CD4-positive, alpha-beta T cell (primary cell): ENCODE measurements at regions of chr11 and their contacts with region 1.

Region 1: GRCh38 chr11:46392421-46393230 is 1.1 kb upstream of the CHRM4 start:
- DNase-seq: peak; percentile 57 to 89 (median 72)
- ATAC-seq: peak; percentile 87
- H3K4me3 ChIP-seq: peak overlapping the region; percentile 24
- H3K4me3 Mint-ChIP-seq: peak overlapping the region; percentile 74
- H3K27ac ChIP-seq: no peak overlapping the region
- H3K27ac Mint-ChIP-seq: no peak overlapping the region
- H3K4me1 ChIP-seq: peaks cover 46% of the 10 kb centered on the region
- H3K4me1 Mint-ChIP-seq: peaks cover 34% of the 10 kb centered on the region
- H3K27me3 ChIP-seq: peaks cover 38 to 51% of the 10 kb centered on the region in 2 experiments
- H3K27me3 Mint-ChIP-seq: peaks cover 46% of the 10 kb centered on the region
- CTCF ChIP-seq: no peak

Region 2: DNA sequence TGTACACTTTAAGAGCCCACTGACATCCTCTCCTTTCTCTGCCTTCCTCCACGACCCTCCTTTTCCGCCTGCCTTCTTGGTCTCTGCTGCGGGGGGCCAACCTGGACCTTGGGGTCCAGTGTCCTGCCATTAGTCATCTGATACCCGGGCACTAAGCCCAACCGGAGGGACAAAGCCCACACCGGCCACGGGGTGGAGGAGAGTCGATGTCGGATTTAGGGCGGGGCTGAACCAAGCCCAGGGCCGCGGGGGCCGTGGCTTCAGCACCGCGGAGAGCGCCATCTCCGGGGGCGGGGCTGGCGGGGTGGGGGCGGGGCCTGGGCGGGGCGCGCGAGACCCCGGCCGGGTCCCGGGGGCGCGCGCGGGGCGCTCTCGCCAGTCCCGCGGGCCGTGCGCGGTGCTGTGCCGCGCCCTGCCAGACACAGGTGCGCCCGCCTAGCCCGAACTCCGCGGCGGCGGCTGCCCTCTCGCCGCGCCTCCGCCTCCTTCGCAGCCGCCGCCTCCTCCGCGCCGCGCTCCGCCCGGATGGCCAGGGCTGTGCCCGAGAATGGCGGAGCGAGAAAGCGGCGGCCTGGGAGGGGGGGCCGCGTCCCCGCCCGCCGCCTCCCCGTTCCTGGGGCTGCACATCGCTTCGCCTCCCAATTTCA is 507.2 kb before region 1 on chr11 and contains the start of gene MAPK8IP1:
- CTCF ChIA-PET with region 1: no interaction called
- POLR2A ChIA-PET with region 1: no interaction called
- intact Hi-C with region 1: loop called in 1 of 2 experiments (anchors 5 kb)
- DNase-seq: peak; percentile 14 to 83 (median 46)
- ATAC-seq: peak; percentile 74
- H3K4me3 ChIP-seq: peak within 1 kb of the TSS; percentile 41
- H3K4me3 Mint-ChIP-seq: peak within 1 kb of the TSS; percentile 81
- H3K27ac ChIP-seq: no peak within 1 kb of the TSS
- H3K27ac Mint-ChIP-seq: peak within 1 kb of the TSS; percentile 77
- H3K4me1 ChIP-seq: peaks cover 13% of the 10 kb centered on the region
- H3K4me1 Mint-ChIP-seq: peaks cover 11% of the 10 kb centered on the region
- H3K27me3 ChIP-seq: no peaks in the 10 kb centered on the region
- H3K27me3 Mint-ChIP-seq: peaks cover 5% of the 10 kb centered on the region
- CTCF ChIP-seq: no peak
- total RNA-seq, gene MAPK8IP1: 2.3 to 2.4 TPM

Region 3: GRCh38 chr11:46003574-46003973 is 389.1 kb before region 1 on chr11:
- CTCF ChIA-PET with region 1: no interaction called
- POLR2A ChIA-PET with region 1: no interaction called
- intact Hi-C with region 1: no loop called
- DNase-seq: no peak
- ATAC-seq: no peak
- H3K4me3 ChIP-seq: no peak overlapping the region
- H3K4me3 Mint-ChIP-seq: no peak overlapping the region
- H3K27ac ChIP-seq: no peak overlapping the region
- H3K27ac Mint-ChIP-seq: no peak overlapping the region
- H3K4me1 ChIP-seq: no peaks in the 10 kb centered on the region
- H3K4me1 Mint-ChIP-seq: peaks cover 11% of the 10 kb centered on the region
- H3K27me3 ChIP-seq: no peaks in the 10 kb centered on the region
- H3K27me3 Mint-ChIP-seq: no peaks in the 10 kb centered on the region
- CTCF ChIP-seq: no peak

Region 4: GRCh38 chr11:46537537-46538295 is 145.1 kb after region 1 on chr11:
- CTCF ChIA-PET with region 1: no interaction called
- POLR2A ChIA-PET with region 1: no interaction called
- intact Hi-C with region 1: loop called in 1 of 2 experiments (anchors 5 kb)
- DNase-seq: peak; percentile 30 to 82 (median 48)
- ATAC-seq: peak; percentile 96
- H3K4me3 ChIP-seq: no peak overlapping the region
- H3K4me3 Mint-ChIP-seq: no peak overlapping the region
- H3K27ac ChIP-seq: no peak overlapping the region
- H3K27ac Mint-ChIP-seq: peak overlapping the region; percentile 1
- H3K4me1 ChIP-seq: peaks cover 3% of the 10 kb centered on the region
- H3K4me1 Mint-ChIP-seq: peaks cover 36% of the 10 kb centered on the region
- H3K27me3 ChIP-seq: no peaks in the 10 kb centered on the region
- H3K27me3 Mint-ChIP-seq: no peaks in the 10 kb centered on the region
- CTCF ChIP-seq: peak; percentile 96